ENCODE measurements at regions of chr3 and their contacts with region 1.

Region 1: DNA sequence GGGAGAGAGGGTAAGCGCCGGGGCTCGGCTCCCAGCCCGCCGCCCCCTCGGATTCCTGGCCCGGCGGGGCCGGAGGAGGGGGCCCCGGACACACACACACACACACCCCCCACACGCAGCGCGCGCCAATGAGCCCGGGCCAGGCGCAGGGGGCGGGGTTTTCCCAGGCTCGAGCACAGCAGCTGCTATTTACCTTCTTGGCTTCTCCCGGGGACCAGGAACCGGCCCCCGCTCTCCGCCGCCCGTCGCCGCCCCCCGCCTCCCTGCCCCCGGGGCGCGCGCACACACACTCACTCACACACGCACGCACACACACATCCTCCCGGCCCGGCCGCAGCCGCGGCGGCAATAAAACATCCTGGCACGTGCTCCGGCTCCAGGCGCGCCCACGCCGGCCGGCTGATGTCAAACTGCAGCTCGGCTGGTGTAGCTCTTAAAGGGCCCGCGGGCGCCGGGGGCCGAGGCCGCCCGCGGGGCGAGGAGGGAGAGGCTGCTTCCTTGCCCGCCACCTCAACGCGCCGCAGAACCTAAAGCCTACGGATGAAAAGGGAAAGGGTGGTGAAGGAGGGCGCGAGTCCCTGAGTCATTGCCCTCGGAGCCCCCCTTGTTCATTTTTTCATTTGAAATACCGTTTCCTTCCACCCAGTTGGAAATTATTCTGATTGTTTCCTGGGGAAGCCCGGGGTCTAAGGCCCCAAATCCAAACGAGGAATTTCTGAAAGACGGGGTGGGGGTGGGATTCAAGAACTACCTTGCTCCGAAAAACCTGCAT is 1.0 kb upstream of the HES1 start:
- DNase-seq: peak; percentile 97
- ATAC-seq: peak; percentile 37
- H3K4me3 ChIP-seq: peak overlapping the region; percentile 89
- H3K27ac ChIP-seq: peak overlapping the region; percentile 67
- H3K4me1 ChIP-seq: peaks cover 58% of the 10 kb centered on the region
- H3K27me3 ChIP-seq: no peaks in the 10 kb centered on the region
- CTCF ChIP-seq: no peak

Region 2: GRCh38 chr3:193842029-193842798 is 292.7 kb before region 1 on chr3:
- CTCF ChIA-PET with region 1: interaction called, 4 read pairs
- POLR2A ChIA-PET with region 1: interaction called, 5 read pairs
- intact Hi-C with region 1: loop called (anchors 1 kb)
- DNase-seq: no peak
- ATAC-seq: no peak
- H3K4me3 ChIP-seq: no peak overlapping the region
- H3K27ac ChIP-seq: no peak overlapping the region
- H3K4me1 ChIP-seq: peaks cover 38% of the 10 kb centered on the region
- H3K27me3 ChIP-seq: no peaks in the 10 kb centered on the region
- CTCF ChIP-seq: no peak

Region 3: DNA sequence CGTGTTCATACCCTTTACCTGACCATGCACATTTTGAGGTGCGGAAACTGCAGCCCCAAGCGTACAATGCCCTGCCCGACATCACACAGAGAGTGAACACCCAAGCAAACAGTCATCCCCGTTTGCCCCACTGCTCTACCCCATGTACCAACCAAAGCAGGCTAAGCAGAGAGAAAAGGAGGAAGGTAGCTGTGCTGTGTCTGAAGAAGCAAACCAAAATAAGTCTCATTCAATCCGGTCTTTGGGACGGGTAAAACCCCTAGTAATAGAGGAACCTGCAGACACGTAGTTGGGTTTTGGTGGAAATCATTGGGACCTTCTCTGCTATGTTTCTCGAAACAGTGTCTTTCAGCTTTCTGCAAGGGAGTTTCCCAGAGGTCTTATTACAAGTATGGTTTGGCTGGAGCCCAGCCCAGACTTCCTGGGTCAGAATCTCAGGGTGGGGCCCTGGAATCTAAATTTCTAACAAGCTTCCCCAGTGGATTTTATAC is 163.6 kb before region 1 on chr3:
- CTCF ChIA-PET with region 1: no interaction called
- POLR2A ChIA-PET with region 1: interaction called, 9 read pairs
- intact Hi-C with region 1: loop called (anchors 1 kb)
- DNase-seq: peak; percentile 81
- ATAC-seq: peak; percentile 86
- H3K4me3 ChIP-seq: peak overlapping the region; percentile 66
- H3K27ac ChIP-seq: peak overlapping the region; percentile 91
- H3K4me1 ChIP-seq: peaks cover 35% of the 10 kb centered on the region
- H3K27me3 ChIP-seq: no peaks in the 10 kb centered on the region
- CTCF ChIP-seq: no peak

Region 4: DNA sequence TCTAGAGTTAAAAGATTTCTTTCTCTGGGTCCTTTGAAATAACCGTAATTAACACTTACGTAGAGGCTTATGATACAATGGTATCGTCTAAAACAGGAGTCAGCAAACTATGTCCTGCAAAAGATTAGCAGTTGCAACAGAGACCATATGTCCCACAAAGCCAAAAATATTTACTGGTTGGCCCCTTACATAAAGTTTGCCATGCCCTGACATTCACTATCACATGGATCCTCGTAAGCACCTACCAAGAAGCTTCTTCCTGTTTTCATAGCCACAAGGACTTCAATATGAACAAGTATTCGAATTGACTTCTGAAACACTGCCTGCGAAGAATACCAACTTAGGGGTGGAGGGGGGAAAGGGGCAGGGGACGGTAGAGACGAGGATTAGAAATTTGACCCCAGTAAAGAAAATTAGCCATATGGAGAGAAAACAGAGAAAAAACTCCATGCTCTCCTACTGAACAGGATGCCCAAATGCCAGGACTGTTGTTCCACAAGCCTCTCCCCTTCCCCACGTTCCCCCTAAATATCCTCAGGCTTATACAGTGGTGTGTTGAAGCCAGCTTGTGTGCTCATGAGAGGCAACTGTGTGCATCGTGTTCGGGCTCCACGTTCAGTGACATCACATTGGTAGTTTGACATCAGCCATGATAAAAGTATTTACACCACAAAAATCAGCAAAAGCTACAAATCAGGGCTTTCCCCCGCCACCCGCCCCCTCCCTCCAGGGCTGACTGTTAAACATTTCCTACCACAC is 143.1 kb before region 1 on chr3:
- CTCF ChIA-PET with region 1: no interaction called
- POLR2A ChIA-PET with region 1: no interaction called
- intact Hi-C with region 1: no loop called
- DNase-seq: no peak
- ATAC-seq: no peak
- H3K4me3 ChIP-seq: no peak overlapping the region
- H3K27ac ChIP-seq: no peak overlapping the region
- H3K4me1 ChIP-seq: no peaks in the 10 kb centered on the region
- H3K27me3 ChIP-seq: no peaks in the 10 kb centered on the region
- CTCF ChIP-seq: no peak

Region 5: DNA sequence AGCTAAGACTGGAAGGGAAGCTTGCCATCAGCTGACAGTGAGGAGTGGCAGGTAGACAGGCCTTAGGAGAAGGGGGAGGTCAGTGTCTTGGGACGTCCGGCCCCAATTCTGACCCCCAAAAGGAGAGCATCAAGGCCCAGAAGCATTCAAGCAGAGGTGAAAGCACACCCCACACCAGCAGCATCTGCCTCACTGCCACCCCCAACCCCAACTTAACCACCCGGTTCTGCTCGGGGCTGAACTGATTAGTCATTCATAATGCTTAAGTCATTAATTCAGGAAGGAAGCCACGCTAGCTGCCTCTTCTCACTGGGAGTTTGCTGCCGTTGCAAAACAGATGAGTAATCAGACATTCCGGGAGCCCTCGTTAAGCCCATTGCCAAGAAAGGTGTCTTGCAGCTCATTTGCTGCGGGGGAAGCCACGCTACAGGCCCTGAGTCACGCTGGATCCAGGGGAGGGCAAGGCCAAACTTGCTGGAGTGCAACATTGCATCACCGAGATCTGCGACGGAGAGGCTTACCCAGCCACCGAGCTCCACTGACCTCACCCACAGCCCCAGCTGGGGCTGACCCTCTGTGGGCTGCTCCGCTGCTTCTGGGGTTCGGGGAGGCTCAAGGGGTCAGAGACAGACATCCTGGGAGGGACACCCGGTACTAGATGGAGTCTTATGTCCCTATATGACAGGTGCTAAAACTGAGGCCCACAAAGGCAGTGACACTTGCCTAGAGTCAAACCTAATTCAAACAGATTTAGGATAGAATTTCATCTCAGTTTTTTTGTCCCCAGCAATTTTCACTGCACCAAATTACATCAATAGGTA is 45.4 kb before region 1 on chr3:
- CTCF ChIA-PET with region 1: interaction called, 3 read pairs
- POLR2A ChIA-PET with region 1: interaction called, 26 read pairs
- intact Hi-C with region 1: loop called (anchors 1 kb)
- DNase-seq: peak; percentile 99
- ATAC-seq: peak; percentile 88
- H3K4me3 ChIP-seq: 0 out of 2 replicates have a peak overlapping the region, but pooled peaks have one; percentile 21
- H3K27ac ChIP-seq: peak overlapping the region; percentile 73
- H3K4me1 ChIP-seq: peaks cover 39% of the 10 kb centered on the region
- H3K27me3 ChIP-seq: no peaks in the 10 kb centered on the region
- CTCF ChIP-seq: no peak

Region 6: DNA sequence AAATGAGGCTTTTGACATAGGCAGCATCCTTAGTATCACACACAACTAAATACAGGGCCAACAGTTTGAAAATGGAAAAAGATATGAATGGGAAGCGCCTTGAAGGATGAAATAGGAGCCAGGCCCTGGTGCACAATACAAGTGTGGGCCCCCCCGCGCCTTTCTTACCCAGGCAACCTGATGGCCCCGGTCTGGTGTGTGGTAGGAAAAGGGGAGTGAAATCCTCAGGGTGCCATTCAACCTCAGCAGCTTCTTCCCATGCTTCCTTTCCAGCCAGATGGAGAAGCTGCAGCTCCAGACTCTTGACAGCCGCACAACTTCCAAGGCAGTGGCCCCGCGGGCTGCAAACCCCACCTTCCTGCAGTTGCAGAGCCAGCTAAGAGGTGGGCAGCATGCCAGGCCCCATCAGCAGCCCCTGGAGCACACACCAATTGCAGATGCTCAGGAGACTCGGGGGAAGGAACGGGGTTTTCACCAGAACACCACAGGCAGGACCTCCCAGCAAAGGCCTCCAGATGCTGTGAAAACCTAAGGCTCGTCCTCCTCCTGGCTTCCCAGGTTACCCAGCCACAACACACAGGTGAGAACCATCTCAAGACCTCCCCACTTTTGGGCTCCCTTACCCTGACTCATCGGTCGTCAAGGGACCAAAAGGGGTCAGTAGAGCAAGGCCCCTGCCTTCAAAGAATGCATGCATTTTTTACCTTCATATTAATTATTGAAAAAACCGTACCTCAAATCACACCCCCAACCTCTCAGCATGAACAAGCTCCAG is 114.6 kb after region 1 on chr3:
- CTCF ChIA-PET with region 1: no interaction called
- POLR2A ChIA-PET with region 1: no interaction called
- intact Hi-C with region 1: no loop called
- DNase-seq: no peak
- ATAC-seq: no peak
- H3K4me3 ChIP-seq: no peak overlapping the region
- H3K27ac ChIP-seq: no peak overlapping the region
- H3K4me1 ChIP-seq: no peaks in the 10 kb centered on the region
- H3K27me3 ChIP-seq: no peaks in the 10 kb centered on the region
- CTCF ChIP-seq: no peak

Region 7: GRCh38 chr3:194315088-194315964 is 180.4 kb after region 1 on chr3:
- CTCF ChIA-PET with region 1: interaction called, 42 read pairs
- POLR2A ChIA-PET with region 1: interaction called, 22 read pairs
- intact Hi-C with region 1: loop called (anchors 1 kb)
- DNase-seq: peak; percentile 89
- ATAC-seq: peak; percentile 73
- H3K4me3 ChIP-seq: peak overlapping the region; percentile 64
- H3K27ac ChIP-seq: no peak overlapping the region
- H3K4me1 ChIP-seq: peaks cover 32% of the 10 kb centered on the region
- H3K27me3 ChIP-seq: no peaks in the 10 kb centered on the region
- CTCF ChIP-seq: peak; percentile 93

Measured in PC-3 (cell line).